ENCODE measurements at regions of chr16 and their contacts with region 1.

Region 1: DNA sequence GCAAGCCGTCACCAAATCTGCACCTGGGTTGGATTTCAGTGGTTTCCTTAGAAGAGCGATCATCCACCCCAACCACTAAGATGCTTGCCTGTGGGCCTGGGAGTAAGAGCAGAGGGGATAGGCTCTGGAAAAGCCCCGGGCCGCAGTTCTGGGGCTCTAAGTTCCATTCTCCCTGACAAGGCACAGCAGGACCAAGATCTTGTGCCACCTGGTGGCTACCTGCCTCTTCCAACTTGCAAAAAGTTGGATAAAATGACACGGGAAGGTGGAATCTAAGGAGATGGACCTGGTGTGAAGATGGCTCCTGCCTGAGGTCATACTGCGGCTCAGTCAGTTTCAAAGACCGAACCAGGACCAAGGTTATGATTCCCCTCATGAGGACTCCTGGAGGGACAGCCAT is 42.3 kb downstream of the ABCC12 start:
- DNase-seq: no peak
- ATAC-seq: no peak
- H3K4me3 ChIP-seq: no peak overlapping the region
- H3K27ac ChIP-seq: no peak overlapping the region
- H3K4me1 ChIP-seq: peaks cover 0 to 14% (median 2%) of the 10 kb centered on the region in 12 donors
- H3K27me3 ChIP-seq: no peaks in the 10 kb centered on the region
- CTCF ChIP-seq: peak in 2 of 12 donors; percentile 3 to 10
- POLR2A ChIP-seq: no peak

Region 2: GRCh38 chr16:47732523-47733111 is 380.9 kb before region 1 on chr16:
- intact Hi-C with region 1: no loop called
- DNase-seq: no peak
- ATAC-seq: no peak
- H3K4me3 ChIP-seq: no peak overlapping the region
- H3K27ac ChIP-seq: no peak overlapping the region
- H3K4me1 ChIP-seq: peaks cover 0 to 2% (median 0%) of the 10 kb centered on the region in 12 donors
- H3K27me3 ChIP-seq: no peaks in the 10 kb centered on the region
- CTCF ChIP-seq: no peak
- POLR2A ChIP-seq: no peak

Region 3: DNA sequence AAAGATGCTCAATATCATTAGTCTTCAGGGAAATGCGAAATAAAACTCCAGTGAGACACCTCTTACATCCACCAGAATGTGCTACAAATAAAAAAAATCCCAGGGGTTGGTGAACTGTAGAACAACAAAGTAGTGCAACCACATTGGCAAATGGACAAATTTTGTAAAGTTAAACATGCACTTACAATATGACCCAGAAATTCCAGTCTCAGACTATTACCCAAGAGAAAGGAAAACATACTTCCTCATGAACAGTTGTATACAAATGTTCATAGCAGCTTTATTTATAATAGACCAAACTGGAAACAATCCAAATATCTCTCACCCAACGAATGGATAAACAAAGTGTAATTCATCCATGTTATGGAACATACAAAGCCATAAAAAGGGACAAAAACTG is 197.2 kb before region 1 on chr16:
- intact Hi-C with region 1: no loop called
- DNase-seq: no peak
- ATAC-seq: no peak
- H3K4me3 ChIP-seq: no peak overlapping the region
- H3K27ac ChIP-seq: no peak overlapping the region
- H3K4me1 ChIP-seq: no peaks in the 10 kb centered on the region
- H3K27me3 ChIP-seq: no peaks in the 10 kb centered on the region
- CTCF ChIP-seq: no peak
- POLR2A ChIP-seq: no peak

Region 4: DNA sequence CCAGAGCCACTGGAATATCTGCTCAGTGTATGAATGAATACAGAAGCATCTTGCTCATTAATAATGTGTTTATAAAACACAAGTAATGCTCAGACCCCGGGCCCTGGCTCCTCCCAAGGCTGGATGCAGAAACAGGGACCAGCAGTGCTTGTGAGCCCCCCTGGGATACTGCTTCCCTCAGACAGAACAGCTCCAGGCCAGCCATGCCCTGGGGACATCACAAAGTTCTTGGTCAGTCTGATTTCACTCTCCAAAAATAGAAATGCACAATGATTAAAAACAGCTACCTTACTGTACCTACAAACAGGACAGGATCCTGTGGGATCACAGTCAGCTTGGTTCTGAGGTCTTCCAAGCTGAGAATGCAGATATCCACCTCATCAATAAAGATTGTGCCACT is 25.8 kb before region 1 on chr16:
- intact Hi-C with region 1: loop called in 1 of 10 experiments (anchors 2 kb)
- DNase-seq: peak in 4 of 5 donors; percentile 31 to 70 (median 32)
- ATAC-seq: peak; percentile 40 to 70 (median 61)
- H3K4me3 ChIP-seq: no peak overlapping the region
- H3K27ac ChIP-seq: no peak overlapping the region
- H3K4me1 ChIP-seq: peaks cover 0 to 22% (median 13%) of the 10 kb centered on the region in 12 donors
- H3K27me3 ChIP-seq: no peaks in the 10 kb centered on the region
- CTCF ChIP-seq: no peak
- POLR2A ChIP-seq: no peak

Region 5: GRCh38 chr16:48269011-48269410 is 155.5 kb after region 1 on chr16:
- intact Hi-C with region 1: no loop called
- DNase-seq: no peak
- ATAC-seq: no peak
- H3K4me3 ChIP-seq: no peak overlapping the region
- H3K27ac ChIP-seq: no peak overlapping the region
- H3K4me1 ChIP-seq: peaks cover 0 to 20% (median 9%) of the 10 kb centered on the region in 12 donors
- H3K27me3 ChIP-seq: no peaks in the 10 kb centered on the region
- CTCF ChIP-seq: no peak
- POLR2A ChIP-seq: no peak

Region 6: DNA sequence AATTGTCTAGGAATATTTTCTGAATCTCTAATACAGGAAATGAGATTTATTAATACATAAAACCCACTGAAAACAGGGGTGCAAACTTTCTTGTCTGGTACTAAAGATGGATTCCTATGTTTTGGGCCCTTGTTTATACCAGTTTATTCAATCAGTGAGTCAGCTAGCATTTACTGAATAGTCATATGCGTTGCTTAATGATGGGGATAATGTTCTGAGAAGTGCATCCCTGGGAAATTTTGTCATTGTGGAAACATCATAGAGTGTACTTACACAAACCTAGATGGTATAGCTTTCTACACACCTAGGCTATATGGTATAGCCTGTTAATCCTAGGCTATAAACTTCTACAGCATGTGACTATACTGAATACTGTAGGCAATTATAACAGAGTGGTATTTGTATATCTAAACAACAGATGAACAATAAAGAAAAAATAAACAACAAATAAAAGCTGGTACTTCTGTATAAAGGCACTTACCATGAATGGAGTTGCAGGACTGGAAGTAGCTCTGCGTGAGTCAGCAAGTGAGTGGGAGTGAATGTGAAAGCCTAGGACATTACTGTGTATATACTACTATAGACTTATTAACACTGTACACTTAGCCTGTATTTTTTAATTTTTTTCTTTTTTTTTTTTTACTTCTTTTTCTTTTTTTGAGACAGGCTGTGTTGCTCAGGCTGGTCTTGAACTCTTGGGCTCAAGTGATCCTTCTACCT is 208.0 kb after region 1 on chr16:
- intact Hi-C with region 1: no loop called
- DNase-seq: no peak
- ATAC-seq: no peak
- H3K4me3 ChIP-seq: no peak overlapping the region
- H3K27ac ChIP-seq: no peak overlapping the region
- H3K4me1 ChIP-seq: peaks cover 3 to 42% (median 28%) of the 10 kb centered on the region in 12 donors
- H3K27me3 ChIP-seq: no peaks in the 10 kb centered on the region
- CTCF ChIP-seq: no peak
- POLR2A ChIP-seq: no peak